Left cardiac atrium (tissue), 4 donors: ENCODE measurements at regions of chr3 and their contacts with region 1.

Region 1: DNA sequence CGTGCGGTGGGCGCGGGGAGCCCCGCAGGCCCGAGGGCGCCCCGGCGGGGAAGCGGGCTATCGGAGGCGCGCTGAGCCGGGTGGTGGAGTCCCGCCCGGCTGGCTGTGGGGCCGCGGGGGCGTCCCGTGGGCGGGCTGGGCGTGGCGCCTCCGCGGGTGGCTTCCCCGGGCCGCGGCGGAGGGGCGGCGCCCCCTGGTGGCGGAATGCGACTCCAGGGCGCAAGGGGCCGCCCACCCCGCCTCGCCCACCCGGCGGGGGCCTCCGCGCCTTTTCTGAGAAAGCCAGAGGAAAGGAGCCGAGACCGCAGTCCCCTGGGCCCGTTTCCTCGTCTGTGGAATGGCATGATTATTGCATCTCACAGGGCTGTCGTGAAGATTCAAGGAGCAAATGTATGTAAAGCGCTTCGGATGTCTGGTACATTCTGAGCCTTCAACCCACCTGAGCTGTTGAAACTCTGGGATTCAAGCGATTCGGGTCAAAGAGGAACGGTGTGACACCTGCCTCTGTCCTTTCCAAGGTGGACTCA is 31.9 kb upstream of the RAB6B start:
- DNase-seq: peak; percentile 78
- ATAC-seq: peak; percentile 88 to 94

Region 2: GRCh38 chr3:133661454-133662277 is 265.9 kb before region 1 on chr3 and contains the start of gene TOPBP1:
- intact Hi-C with region 1: loop called in 1 of 2 experiments (anchors 10 kb)
- DNase-seq: peak; percentile 86
- ATAC-seq: peak; percentile 95 to 96
- total RNA-seq, gene TOPBP1: 12.0 to 12.4 TPM

Region 3: DNA sequence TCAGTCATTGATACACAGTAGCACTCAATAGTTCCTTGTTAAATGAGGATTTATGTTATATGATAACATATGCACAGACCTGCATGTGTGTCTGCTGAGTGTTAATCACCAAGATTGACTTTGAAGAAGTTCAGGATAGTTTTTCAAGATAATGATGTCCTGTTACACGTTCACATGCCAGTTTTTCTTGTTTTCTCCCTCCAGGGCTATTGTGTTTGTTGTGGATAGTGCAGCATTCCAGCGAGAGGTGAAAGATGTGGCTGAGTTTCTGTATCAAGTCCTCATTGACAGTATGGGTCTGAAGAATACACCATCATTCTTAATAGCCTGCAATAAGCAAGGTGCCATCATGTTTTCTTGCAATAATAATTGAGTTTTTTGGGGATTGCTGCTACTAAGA is 112.2 kb before region 1 on chr3:
- intact Hi-C with region 1: loop called (anchors 2 to 5 kb)
- DNase-seq: no peak
- ATAC-seq: no peak

Region 4: GRCh38 chr3:133821767-133822638 is 105.6 kb before region 1 on chr3:
- intact Hi-C with region 1: loop called (anchors 2 to 5 kb)
- DNase-seq: peak; percentile 88
- ATAC-seq: peak in 1 of 2 donors; percentile 54

Region 5: DNA sequence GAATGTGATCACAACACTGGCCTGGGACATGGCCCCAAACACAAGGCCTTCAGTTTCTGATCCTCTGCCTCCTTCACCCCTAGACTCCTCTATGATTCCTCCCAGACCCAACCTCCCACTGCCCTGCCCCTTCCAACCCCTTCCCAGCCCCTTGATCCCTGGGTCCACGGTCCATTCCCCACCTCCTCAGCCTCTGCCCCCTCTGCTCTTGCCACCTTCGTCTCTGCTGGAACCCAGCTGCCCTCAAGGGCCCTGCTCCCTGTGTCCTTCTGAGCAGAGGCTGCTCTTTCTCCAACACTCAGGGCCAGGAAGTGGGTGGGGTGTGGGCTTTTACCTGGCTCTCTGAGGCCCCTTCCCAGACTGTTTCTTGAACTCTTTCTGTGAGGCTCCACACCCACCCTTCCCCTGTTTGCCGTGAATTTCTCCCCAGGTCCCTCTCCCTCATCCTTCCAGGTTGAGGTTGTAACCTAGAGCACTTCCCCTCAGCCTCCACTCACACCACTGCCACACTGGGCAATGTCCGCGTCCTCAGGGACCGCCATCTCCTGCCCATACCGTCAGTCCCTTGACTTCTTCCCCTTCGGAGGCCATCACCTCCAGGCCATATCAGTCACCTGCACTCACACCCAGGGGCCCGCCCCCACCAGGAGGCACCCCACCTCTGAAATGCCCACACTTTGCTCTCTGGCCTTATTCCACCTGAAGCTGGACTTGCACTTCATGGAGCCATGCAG is 120.8 kb after region 1 on chr3:
- intact Hi-C with region 1: loop called in 1 of 2 experiments (anchors 10 kb)
- DNase-seq: no peak
- ATAC-seq: no peak

Region 6: DNA sequence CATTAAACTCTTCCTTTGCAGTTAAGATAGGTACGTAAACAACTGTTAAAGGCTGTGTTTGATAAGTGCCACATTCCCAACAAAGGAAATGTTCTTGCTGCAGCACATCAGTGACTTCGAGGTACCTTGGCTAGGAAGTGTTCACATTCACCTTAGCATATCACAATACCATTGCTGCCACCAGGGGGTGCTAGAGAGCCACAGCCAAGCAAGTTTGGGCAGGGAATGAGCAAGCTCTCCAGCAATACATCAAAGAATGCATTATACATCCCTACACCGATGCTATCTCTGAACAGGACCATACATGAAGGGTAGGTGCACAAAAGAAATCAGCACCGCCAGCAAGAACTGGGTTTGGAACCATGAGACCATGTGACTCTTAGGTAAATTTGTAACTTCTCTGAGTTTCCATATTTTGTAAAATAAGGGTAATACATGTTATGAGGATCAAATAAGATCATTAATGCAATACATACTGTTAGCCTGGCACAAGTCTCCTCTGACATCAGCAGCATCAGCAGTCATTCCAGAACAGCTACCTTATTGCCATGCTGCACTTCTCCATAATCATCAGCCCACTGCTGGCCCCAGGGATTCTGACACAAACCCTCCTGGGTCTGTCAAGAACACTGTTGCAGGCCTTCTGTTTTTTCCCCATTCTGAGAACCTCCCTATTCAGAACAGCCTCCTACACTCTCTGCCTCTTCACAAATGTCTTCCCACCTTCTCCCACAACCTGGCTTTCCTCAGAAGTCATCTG is 285.5 kb after region 1 on chr3:
- intact Hi-C with region 1: loop called in 1 of 2 experiments (anchors 5 kb)
- DNase-seq: peak; percentile 80
- ATAC-seq: peak; percentile 81 to 89

Region 7: GRCh38 chr3:134308350-134308891 is 380.8 kb after region 1 on chr3:
- intact Hi-C with region 1: loop called in 1 of 2 experiments (anchors 10 kb)
- DNase-seq: peak; percentile 82
- ATAC-seq: peak; percentile 57 to 65